A549 (cell line): ENCODE measurements at regions of chr1 and their contacts with region 1.

Region 1: GRCh38 chr1:156945881-156946661 is 25.6 kb downstream of the LRRC71 start:
- DNase-seq: no peak
- ATAC-seq: no peak
- H3K4me3 ChIP-seq: no peak overlapping the region
- H3K27ac ChIP-seq: no peak overlapping the region
- H3K4me1 ChIP-seq: no peaks in the 10 kb centered on the region
- CTCF ChIP-seq: no peak
- EP300 ChIP-seq: no peak
- POLR2A ChIP-seq: no peak
- RAD21 ChIP-seq: no peak

Region 2: GRCh38 chr1:156927215-156928042 is 18.6 kb before region 1 on chr1:
- CTCF ChIA-PET with region 1: interaction called, 28 read pairs
- POLR2A ChIA-PET with region 1: interaction called, 3 read pairs
- DNase-seq: peak; percentile 84 to 87
- ATAC-seq: peak; percentile 85 to 94
- H3K4me3 ChIP-seq: peak overlapping the region; percentile 46
- H3K27ac ChIP-seq: peak overlapping the region; percentile 61 to 82; a peak in 5 of 6 replicates
- H3K4me1 ChIP-seq: peaks cover 7% of the 10 kb centered on the region; the same call in 1 of the 3 replicates
- CTCF ChIP-seq: peak; percentile 82
- EP300 ChIP-seq: no peak
- POLR2A ChIP-seq: no peak
- RAD21 ChIP-seq: peak; percentile 90 to 92

Region 3: DNA sequence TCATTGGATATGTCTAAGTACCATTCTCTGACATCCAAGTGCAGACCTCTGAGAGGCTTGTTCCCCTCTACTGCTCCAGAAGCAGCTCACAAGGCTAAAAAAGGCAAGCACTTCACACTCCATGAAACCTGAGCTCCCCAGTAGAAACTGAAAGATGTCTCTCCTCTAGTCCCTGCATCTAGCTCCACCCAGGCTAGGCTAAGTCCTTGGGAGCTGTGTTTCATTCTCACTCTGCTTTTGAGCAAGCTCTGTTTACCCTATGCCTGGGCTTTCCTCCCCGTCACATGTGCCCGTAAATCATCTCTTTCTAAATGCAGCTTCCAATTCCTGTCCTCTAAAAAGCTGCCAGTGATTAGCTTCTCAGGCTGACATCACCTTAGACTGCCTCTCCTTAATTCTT is 13.3 kb after region 1 on chr1:
- CTCF ChIA-PET with region 1: interaction called, 10 read pairs
- POLR2A ChIA-PET with region 1: no interaction called
- DNase-seq: no peak
- ATAC-seq: 0 out of 6 replicates have a peak, but pooled peaks of 1 of the 2 experiments have one; percentile 41
- H3K4me3 ChIP-seq: no peak overlapping the region
- H3K27ac ChIP-seq: no peak overlapping the region
- H3K4me1 ChIP-seq: no peaks in the 10 kb centered on the region
- CTCF ChIP-seq: no peak
- EP300 ChIP-seq: no peak
- POLR2A ChIP-seq: no peak
- RAD21 ChIP-seq: no peak

Region 4: GRCh38 chr1:157025385-157025784 is 79.3 kb after region 1 on chr1:
- CTCF ChIA-PET with region 1: no interaction called
- POLR2A ChIA-PET with region 1: no interaction called
- DNase-seq: no peak
- ATAC-seq: no peak; a peak in 1 of 6 replicates
- H3K4me3 ChIP-seq: no peak overlapping the region
- H3K27ac ChIP-seq: no peak overlapping the region
- H3K4me1 ChIP-seq: no peaks in the 10 kb centered on the region
- CTCF ChIP-seq: no peak
- EP300 ChIP-seq: no peak
- POLR2A ChIP-seq: no peak
- RAD21 ChIP-seq: no peak

Region 5: GRCh38 chr1:157429601-157430240 is 483.6 kb after region 1 on chr1:
- CTCF ChIA-PET with region 1: no interaction called
- POLR2A ChIA-PET with region 1: no interaction called
- DNase-seq: no peak
- ATAC-seq: no peak
- H3K4me3 ChIP-seq: no peak overlapping the region
- H3K27ac ChIP-seq: no peak overlapping the region
- H3K4me1 ChIP-seq: no peaks in the 10 kb centered on the region
- CTCF ChIP-seq: no peak
- EP300 ChIP-seq: no peak
- POLR2A ChIP-seq: no peak
- RAD21 ChIP-seq: no peak